ENCODE measurements at regions of chr20 and their contacts with region 1.

Region 1: GRCh38 chr20:36144336-36144735 is 10.2 kb upstream of the EPB41L1 start:
- DNase-seq: no peak
- H3K4me3 ChIP-seq: no peak overlapping the region
- H3K27ac ChIP-seq: no peak overlapping the region
- H3K4me1 ChIP-seq: no peaks in the 10 kb centered on the region
- H3K27me3 ChIP-seq: no peaks in the 10 kb centered on the region
- CTCF ChIP-seq: no peak
- POLR2A ChIP-seq: no peak

Region 2: GRCh38 chr20:35994994-35995453 is 149.3 kb before region 1 on chr20:
- intact Hi-C with region 1: loop called (anchors 2 kb)
- DNase-seq: peak; percentile 82
- H3K4me3 ChIP-seq: no peak overlapping the region
- H3K27ac ChIP-seq: no peak overlapping the region
- H3K4me1 ChIP-seq: no peaks in the 10 kb centered on the region
- H3K27me3 ChIP-seq: no peaks in the 10 kb centered on the region
- CTCF ChIP-seq: peak; percentile 42 to 91 (median 88)
- POLR2A ChIP-seq: no peak

Measured in prostate gland (tissue), 2 donors.